Ascending aorta (tissue), 2 donors: ENCODE measurements at regions of chr1 and their contacts with region 1.

Region 1: GRCh38 chr1:95023399-95024043 is 49.2 kb downstream of the ALG14 start:
- DNase-seq: no peak
- H3K4me3 ChIP-seq: peak overlapping the region in 1 of 2 donors; percentile 17
- H3K27ac ChIP-seq: peak overlapping the region; percentile 78 to 85
- H3K4me1 ChIP-seq: peaks cover 3 to 27% of the 10 kb centered on the region in 2 donors
- H3K27me3 ChIP-seq: no peaks in the 10 kb centered on the region
- CTCF ChIP-seq: no peak

Region 2: GRCh38 chr1:94971491-94971924 is 52.0 kb before region 1 on chr1:
- intact Hi-C with region 1: loop called (anchors 5 kb)
- DNase-seq: no peak
- H3K4me3 ChIP-seq: no peak overlapping the region
- H3K27ac ChIP-seq: peak overlapping the region; percentile 51 to 61
- H3K4me1 ChIP-seq: peaks cover 6 to 17% of the 10 kb centered on the region in 2 donors
- H3K27me3 ChIP-seq: no peaks in the 10 kb centered on the region
- CTCF ChIP-seq: no peak